ENCODE measurements at regions of chr16 and their contacts with region 1.

Region 1: DNA sequence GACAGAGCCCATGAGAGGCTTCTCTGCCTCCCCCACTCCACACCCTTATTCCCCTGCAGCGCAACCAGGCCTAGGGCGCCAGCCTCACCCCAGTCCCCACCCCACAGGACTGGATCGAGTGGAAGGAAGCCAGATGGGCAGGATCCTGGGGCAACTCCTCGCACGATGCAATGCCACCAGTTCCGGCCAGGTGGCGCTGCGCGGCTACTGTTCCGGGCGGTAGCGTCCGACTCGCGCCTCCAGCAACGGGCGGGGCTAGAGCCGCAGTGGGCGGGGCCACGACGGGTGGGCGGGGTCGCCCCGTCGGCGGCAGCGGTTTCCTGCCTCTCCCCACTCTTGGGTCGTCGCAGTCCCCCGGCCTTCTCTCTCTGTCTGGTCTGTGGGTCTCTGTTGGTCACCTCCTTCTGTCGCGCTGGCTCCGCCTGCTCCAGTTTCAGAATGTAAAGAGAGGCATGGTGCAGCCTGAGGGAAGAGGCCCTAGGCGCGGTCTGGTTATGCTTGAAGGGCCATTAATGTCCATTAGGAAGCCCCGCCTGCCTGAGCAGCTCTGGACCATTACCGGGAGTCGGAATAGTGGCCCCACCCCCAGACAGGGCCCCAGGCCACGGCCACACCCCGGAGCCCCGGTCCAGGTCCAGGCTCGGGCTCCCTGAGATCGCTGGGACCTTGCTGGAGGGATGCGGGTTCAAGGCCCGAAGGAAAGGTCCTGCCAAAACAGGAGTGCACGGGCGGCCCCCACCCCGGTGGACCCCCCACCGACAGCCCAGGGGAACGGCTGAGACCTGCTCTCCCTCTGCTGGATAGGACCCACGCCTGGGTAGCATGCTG is 3.4 kb upstream of the NHERF2 start:
- DNase-seq: peak; percentile 87 to 91 (median 89)
- H3K4me3 ChIP-seq: peak overlapping the region; percentile 5 to 72 (median 47)
- H3K4me3 Mint-ChIP-seq: peak overlapping the region; percentile 80 to 92
- H3K27ac ChIP-seq: peak overlapping the region in 1 of 2 donors; percentile 9
- H3K27ac Mint-ChIP-seq: peak overlapping the region in 3 of 7 donors; percentile 68 to 89 (median 87)
- H3K4me1 ChIP-seq: peaks cover 15 to 32% of the 10 kb centered on the region in 2 donors
- H3K4me1 Mint-ChIP-seq: peaks cover 23% of the 10 kb centered on the region
- H3K27me3 ChIP-seq: peaks cover 23 to 62% of the 10 kb centered on the region in 2 donors
- H3K27me3 Mint-ChIP-seq: peaks cover 51 to 80% (median 72%) of the 10 kb centered on the region in 3 donors
- CTCF ChIP-seq: peak; percentile 95

Region 2: DNA sequence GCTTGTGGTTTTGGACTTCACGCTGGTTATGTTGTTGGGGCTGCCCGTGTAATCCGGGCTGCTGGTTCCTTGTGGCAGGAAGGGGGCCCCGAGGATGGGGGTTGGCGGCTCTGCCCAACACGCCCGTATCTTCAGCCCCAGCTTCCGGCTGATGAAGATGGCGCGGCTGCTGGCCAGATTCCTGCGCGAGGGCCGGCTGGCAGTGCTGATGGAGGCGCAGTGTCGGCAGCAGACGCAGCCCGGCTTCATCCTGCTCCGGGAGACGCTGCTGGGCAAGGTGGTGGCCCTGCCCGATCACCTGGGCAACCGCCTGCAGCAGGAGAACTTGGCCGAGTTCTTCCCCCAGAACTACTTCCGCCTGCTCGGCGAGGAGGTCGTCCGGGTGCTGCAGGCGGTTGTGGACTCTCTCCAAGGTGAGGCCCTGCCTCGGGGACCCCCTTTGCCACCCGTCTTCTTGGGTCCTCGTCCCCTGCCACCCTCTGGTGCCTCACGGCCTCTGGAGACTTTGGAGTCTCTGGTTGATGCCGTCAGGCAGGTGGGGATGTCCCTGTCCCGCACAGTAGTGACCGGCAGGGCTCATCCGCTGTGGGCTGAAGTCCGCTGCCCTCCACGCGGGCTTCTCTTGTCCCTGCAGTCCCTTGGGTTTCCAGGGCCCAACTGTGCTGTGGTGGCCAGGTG is 528.0 kb before region 1 on chr16:
- intact Hi-C with region 1: no loop called
- DNase-seq: no peak
- H3K4me3 ChIP-seq: no peak overlapping the region
- H3K4me3 Mint-ChIP-seq: no peak overlapping the region
- H3K27ac ChIP-seq: no peak overlapping the region
- H3K27ac Mint-ChIP-seq: no peak overlapping the region
- H3K4me1 ChIP-seq: peaks cover 22 to 27% of the 10 kb centered on the region in 2 donors
- H3K4me1 Mint-ChIP-seq: peaks cover 19% of the 10 kb centered on the region
- H3K27me3 ChIP-seq: no peaks in the 10 kb centered on the region
- H3K27me3 Mint-ChIP-seq: peaks cover 0 to 2% (median 0%) of the 10 kb centered on the region in 3 donors
- CTCF ChIP-seq: no peak

Region 3: GRCh38 chr16:1983544-1984346 is 39.6 kb before region 1 on chr16 and contains the start of gene GFER:
- intact Hi-C with region 1: no loop called
- DNase-seq: peak; percentile 84 to 86 (median 84)
- H3K4me3 ChIP-seq: peak within 1 kb of the TSS; percentile 52 to 87 (median 55)
- H3K4me3 Mint-ChIP-seq: peak within 1 kb of the TSS; percentile 75 to 89
- H3K27ac ChIP-seq: peak within 1 kb of the TSS in 1 of 2 donors; percentile 73
- H3K27ac Mint-ChIP-seq: peak within 1 kb of the TSS in 4 of 7 donors; percentile 35 to 88 (median 80)
- H3K4me1 ChIP-seq: peaks cover 20 to 28% of the 10 kb centered on the region in 2 donors
- H3K4me1 Mint-ChIP-seq: peaks cover 18% of the 10 kb centered on the region
- H3K27me3 ChIP-seq: peaks cover 30 to 51% of the 10 kb centered on the region in 2 donors
- H3K27me3 Mint-ChIP-seq: peaks cover 53 to 63% (median 55%) of the 10 kb centered on the region in 3 donors
- CTCF ChIP-seq: peak; percentile 57
- polyA plus RNA-seq, gene GFER: 8.1 to 22.7 (median 22.4) TPM

Region 4: DNA sequence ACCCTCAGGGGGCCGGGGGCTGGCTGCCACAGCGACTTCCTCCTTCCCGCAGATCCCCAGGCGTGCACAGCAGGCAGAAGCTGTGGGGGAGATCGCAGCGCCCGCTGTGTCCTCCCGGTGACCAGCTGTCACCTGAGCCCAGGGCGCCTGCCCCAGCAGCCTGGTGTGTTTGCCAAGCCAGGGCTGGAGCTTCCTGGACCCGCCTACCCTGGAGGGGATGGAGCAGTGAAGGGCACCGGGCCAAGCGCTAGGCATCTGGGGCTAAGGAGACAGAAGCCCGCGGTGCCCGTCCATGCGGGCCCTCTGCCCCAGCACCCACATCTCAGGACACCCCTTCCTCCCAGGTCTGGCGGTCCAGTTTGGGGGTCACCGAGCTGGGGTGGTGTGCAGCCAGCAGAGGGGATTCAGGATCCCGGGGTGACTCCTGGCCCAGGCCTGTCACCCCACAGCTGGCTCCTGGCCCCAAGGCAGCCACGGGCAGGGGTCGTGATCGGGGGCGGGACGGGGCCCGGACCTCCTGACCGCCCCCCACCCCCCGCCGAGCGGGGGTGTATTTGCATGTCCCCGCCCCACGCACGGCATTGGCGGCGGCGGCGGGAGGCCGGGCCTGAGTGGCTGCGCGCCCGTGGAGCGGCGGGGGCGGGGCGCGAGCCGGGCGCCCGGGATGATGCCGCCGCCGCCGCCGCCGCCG is 124.8 kb after region 1 on chr16 and contains the start of gene RAB26:
- intact Hi-C with region 1: loop called (anchors 5 kb)
- DNase-seq: no peak
- H3K4me3 ChIP-seq: peak within 1 kb of the TSS in 2 of 3 experiments; percentile 20 to 64
- H3K4me3 Mint-ChIP-seq: peak within 1 kb of the TSS; percentile 43 to 70
- H3K27ac ChIP-seq: no peak within 1 kb of the TSS
- H3K27ac Mint-ChIP-seq: no peak within 1 kb of the TSS
- H3K4me1 ChIP-seq: peaks cover 21 to 32% of the 10 kb centered on the region in 2 donors
- H3K4me1 Mint-ChIP-seq: peaks cover 30% of the 10 kb centered on the region
- H3K27me3 ChIP-seq: peaks cover 0 to 24% of the 10 kb centered on the region in 2 donors
- H3K27me3 Mint-ChIP-seq: peaks cover 15 to 38% (median 19%) of the 10 kb centered on the region in 3 donors
- CTCF ChIP-seq: no peak
- polyA plus RNA-seq, gene RAB26: not detected

Measured in CD14-positive monocyte (primary cell).